ENCODE measurements at regions of chr1 and their contacts with region 1.

Region 1: DNA sequence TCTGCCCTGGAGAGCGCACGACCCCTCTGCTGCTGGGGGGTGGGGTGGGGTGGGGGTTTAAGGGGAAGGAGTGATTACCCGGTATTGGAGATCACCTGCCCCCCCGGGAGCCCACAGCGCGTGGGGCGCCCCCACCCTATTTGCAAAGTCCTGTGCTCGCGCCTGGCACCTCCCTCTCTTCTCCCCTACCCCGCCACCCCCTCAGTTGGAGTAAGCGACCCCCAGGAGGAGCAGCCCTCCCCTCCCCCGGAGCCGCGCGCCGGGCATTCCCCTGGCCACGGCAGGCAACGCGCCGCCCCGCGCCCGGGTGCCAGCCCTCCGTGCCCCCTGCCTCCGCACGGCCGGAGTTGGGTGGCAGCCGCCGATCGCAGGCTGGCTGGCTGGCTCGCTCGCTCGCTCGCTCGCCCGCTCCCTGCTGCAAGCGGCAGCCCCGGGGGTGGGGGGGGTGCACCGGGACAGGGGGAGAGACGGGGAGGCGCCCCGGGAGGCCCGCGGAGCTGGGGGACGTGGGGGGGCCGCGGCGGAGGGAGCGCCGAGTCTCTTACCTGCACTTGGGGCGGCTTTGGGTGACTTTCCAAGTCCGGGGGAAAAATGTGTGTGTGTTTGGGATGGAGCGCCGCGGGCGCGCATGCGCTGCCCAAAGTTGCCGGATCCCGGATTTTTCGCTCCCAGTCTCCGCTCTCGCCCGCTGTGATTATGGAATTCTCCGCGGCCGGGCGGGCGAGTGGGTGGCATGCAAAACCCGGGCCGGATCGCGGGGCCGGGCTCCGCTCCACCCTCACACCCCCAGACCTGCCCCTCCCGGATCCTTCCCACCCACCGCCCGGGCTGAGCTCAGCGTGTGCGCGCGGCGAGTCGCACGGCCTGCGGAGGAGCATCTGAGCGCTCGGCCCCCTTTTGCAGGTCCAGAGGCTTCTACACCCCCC is at the start of gene CASZ1:
- DNase-seq: peak; percentile 87
- H3K4me3 Mint-ChIP-seq: peak within 1 kb of the TSS; percentile 95
- H3K27ac Mint-ChIP-seq: no peak within 1 kb of the TSS
- H3K4me1 Mint-ChIP-seq: peaks cover 18% of the 10 kb centered on the region
- H3K27me3 Mint-ChIP-seq: no peaks in the 10 kb centered on the region
- CTCF ChIP-seq: no peak
- total RNA-seq, gene CASZ1: 11.1 and 13.2 TPM in 2 replicates

Region 2: GRCh38 chr1:10530281-10530740 is 266.0 kb before region 1 on chr1:
- CTCF ChIA-PET with region 1: no interaction called
- POLR2A ChIA-PET with region 1: interaction called, 7 read pairs
- intact Hi-C with region 1: loop called (anchors 5 kb)
- DNase-seq: peak; percentile 74
- H3K4me3 Mint-ChIP-seq: peak overlapping the region; percentile 44
- H3K27ac Mint-ChIP-seq: peak overlapping the region; percentile 37
- H3K4me1 Mint-ChIP-seq: peaks cover 32% of the 10 kb centered on the region
- H3K27me3 Mint-ChIP-seq: no peaks in the 10 kb centered on the region
- CTCF ChIP-seq: peak; percentile 89

Region 3: GRCh38 chr1:10694633-10695627 is 101.4 kb before region 1 on chr1:
- CTCF ChIA-PET with region 1: interaction called, 5 read pairs
- POLR2A ChIA-PET with region 1: interaction called, 4 read pairs
- intact Hi-C with region 1: loop called (anchors 1 kb)
- DNase-seq: peak; percentile 83
- H3K4me3 Mint-ChIP-seq: peak overlapping the region; percentile 71
- H3K27ac Mint-ChIP-seq: no peak overlapping the region
- H3K4me1 Mint-ChIP-seq: peaks cover 24% of the 10 kb centered on the region
- H3K27me3 Mint-ChIP-seq: no peaks in the 10 kb centered on the region
- CTCF ChIP-seq: no peak

Region 4: DNA sequence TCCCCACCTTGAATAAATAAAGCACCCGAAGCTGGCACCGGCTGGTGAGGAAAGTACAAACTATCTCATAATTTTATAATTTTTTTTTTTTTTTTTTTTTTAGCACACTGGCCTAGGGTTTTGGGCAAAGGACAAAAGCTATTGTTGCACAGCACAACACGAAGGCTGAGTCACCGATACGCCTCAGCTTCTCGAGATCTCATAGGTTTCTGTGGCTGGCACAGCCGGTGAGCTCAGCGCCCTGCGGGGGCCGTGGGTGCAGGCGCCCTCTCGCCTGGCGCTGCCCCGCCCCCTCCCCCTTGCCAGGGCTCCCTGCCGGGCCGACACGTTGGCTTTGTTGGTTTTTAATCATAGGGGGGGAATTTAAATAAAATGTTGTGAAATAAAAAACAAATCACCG is 17.1 kb before region 1 on chr1:
- CTCF ChIA-PET with region 1: interaction called, 3 read pairs
- POLR2A ChIA-PET with region 1: interaction called, 18 read pairs
- intact Hi-C with region 1: no loop called
- DNase-seq: peak; percentile 96
- H3K4me3 Mint-ChIP-seq: peak overlapping the region; percentile 22
- H3K27ac Mint-ChIP-seq: no peak overlapping the region
- H3K4me1 Mint-ChIP-seq: no peaks in the 10 kb centered on the region
- H3K27me3 Mint-ChIP-seq: no peaks in the 10 kb centered on the region
- CTCF ChIP-seq: no peak

Region 5: DNA sequence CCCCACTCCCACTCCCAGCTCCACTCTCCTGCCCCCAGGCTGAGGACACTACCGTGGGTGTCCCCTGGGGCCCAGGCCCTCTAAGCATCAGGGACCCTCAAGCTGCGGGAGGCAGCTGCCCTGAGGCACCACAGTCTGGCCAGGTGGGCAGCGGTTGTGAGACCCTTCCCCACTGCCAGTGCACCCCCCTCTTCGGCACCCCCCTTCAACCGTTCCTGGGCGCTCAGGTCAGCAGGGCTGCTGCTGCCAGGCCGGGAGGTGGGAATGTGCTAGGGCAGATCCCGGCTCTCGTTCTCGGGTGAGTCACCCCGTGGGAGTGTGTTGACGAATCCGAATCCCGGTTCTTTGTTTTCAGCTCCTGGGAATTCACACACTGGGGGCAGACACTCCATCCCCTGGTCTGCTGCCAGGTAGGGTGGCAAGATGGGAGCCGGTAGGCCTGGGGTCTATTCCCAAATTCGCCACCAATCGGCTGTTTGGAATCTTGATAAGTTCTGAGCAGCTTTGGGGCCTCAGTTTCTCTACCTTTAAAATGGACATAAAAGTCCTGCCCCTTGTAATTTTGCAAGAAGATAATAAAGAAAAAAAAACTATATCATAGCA is 28.6 kb after region 1 on chr1:
- CTCF ChIA-PET with region 1: interaction called, 7 read pairs
- POLR2A ChIA-PET with region 1: interaction called, 19 read pairs
- intact Hi-C with region 1: no loop called
- DNase-seq: peak; percentile 97
- H3K4me3 Mint-ChIP-seq: peak overlapping the region; percentile 73
- H3K27ac Mint-ChIP-seq: peak overlapping the region; percentile 81
- H3K4me1 Mint-ChIP-seq: peaks cover 29% of the 10 kb centered on the region
- H3K27me3 Mint-ChIP-seq: no peaks in the 10 kb centered on the region
- CTCF ChIP-seq: no peak

Region 6: DNA sequence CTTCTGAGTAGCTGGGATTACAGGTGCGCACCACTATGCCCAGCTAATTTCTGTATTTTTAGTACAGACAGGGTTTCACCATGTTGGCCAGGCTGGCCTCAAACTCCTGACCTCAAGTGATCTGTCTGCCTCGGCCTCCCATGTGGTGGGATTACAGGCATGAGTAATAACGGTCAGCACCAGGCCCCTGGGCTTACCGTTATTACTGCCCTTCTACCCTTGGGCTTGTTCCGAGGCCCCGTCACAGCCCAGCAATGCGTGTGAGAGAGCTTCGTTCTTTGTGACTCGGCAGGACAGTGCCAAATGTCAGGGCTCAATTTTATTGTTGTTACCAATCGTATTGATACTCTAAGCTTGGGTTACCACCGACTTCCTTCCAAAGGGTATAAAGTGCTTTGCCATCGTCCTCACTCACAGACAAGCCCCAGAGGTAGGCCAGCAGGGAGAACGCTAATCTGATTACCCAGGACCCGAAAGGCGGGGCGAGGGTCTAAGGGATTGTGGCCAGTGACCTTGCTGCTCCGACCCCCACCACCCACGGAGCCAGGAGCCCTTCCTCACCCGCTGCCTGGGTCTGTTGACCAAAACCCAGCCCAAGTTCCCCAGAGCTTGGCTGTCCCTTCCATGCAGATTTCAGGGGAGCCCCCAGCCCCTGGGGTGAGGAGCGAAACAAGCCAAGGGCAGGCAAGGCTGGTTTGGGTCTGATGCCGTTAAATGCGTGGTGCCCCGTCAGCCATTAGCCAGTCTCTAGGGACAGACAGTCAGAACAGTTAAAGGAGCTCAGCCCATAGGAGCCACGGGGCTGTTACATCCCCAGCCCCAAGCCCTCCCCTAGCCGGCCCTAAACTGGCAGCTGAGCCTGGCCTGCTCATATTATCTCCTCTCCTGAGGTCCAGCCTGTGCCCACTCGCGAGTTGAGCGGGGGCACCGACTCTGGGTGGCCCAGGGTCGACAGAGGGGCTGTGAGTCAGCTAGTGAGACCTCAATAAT is 55.0 kb after region 1 on chr1:
- CTCF ChIA-PET with region 1: no interaction called
- POLR2A ChIA-PET with region 1: no interaction called
- intact Hi-C with region 1: no loop called
- DNase-seq: no peak
- H3K4me3 Mint-ChIP-seq: no peak overlapping the region
- H3K27ac Mint-ChIP-seq: no peak overlapping the region
- H3K4me1 Mint-ChIP-seq: no peaks in the 10 kb centered on the region
- H3K27me3 Mint-ChIP-seq: no peaks in the 10 kb centered on the region
- CTCF ChIP-seq: no peak

Region 7: DNA sequence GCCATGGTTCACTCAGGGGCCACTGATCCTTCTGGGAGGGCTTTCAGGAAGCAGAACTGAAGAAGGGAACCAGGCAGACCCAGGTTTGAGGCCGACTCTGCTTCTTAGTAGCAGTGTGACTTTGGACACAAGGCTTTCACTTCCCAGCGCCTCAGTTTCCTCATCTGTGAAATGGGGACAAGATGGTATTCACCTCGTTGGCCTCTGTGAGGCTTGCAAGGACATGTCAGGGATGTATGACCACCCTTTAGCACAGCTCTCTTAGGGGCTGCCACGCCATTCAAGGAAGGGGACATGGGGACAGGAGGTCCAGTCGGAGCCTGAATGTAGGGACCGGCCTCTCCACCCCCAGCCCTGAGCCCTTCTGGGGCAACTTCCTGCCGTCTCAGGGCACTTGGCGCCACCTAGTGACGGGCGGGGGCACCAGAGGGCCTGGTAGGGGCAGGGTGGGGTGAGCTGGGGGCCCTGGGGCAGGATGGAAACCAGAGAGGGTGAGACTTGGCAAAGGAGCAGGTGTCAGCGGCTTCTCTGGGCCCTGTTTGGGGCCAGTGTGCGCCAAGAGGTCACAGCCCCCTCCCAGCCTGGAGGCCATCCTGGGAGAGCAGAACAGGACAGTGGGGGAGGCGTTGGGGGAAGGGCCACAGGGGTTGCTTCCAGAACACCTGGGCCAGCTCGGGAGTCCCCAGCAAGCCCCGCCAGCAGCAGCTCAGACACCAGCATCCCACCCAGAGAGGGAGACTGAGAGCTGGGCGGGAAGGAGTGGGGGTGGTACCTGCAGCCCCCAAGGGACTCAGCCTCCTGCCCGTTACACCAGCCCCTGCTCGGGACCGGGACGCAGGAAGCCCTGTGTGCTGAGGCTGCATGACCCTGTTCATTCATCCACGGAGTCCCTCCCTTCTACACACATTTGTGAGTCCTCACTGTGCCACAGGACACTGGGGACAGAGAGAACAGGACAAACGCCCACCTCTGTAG is 113.7 kb after region 1 on chr1:
- CTCF ChIA-PET with region 1: no interaction called
- POLR2A ChIA-PET with region 1: no interaction called
- intact Hi-C with region 1: loop called (anchors 10 kb)
- DNase-seq: peak; percentile 62
- H3K4me3 Mint-ChIP-seq: no peak overlapping the region
- H3K27ac Mint-ChIP-seq: no peak overlapping the region
- H3K4me1 Mint-ChIP-seq: peaks cover 7% of the 10 kb centered on the region
- H3K27me3 Mint-ChIP-seq: no peaks in the 10 kb centered on the region
- CTCF ChIP-seq: peak; percentile 80

Measured in MCF 10A (cell line).